Ascending aorta (tissue), 2 donors: ENCODE measurements at regions of chr2 and their contacts with region 1.

Region 1: DNA sequence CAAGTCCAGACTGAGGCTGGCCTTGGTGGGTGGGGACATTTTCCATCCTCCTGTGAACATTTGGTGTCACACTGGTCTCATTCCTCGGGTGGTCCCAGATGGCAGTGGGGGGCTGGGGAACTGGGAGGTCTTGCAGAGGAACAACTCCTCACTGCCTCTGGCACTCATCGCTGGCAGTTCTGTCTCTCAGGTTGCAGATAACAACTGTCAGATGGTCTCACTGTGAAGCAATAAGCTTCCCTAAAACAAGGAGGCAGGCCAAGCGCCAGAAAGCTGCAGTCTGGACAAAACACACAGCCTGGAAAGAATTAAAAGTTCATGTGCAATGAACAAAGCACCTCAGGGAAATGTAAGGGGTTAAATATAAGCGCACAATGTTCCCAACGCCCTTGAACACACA is 78.1 kb downstream of the IRS1 start:
- DNase-seq: no peak
- H3K4me3 ChIP-seq: no peak overlapping the region
- H3K27ac ChIP-seq: no peak overlapping the region
- H3K4me1 ChIP-seq: peaks cover 0 to 6% of the 10 kb centered on the region in 2 donors
- H3K27me3 ChIP-seq: no peaks in the 10 kb centered on the region
- CTCF ChIP-seq: no peak

Region 2: DNA sequence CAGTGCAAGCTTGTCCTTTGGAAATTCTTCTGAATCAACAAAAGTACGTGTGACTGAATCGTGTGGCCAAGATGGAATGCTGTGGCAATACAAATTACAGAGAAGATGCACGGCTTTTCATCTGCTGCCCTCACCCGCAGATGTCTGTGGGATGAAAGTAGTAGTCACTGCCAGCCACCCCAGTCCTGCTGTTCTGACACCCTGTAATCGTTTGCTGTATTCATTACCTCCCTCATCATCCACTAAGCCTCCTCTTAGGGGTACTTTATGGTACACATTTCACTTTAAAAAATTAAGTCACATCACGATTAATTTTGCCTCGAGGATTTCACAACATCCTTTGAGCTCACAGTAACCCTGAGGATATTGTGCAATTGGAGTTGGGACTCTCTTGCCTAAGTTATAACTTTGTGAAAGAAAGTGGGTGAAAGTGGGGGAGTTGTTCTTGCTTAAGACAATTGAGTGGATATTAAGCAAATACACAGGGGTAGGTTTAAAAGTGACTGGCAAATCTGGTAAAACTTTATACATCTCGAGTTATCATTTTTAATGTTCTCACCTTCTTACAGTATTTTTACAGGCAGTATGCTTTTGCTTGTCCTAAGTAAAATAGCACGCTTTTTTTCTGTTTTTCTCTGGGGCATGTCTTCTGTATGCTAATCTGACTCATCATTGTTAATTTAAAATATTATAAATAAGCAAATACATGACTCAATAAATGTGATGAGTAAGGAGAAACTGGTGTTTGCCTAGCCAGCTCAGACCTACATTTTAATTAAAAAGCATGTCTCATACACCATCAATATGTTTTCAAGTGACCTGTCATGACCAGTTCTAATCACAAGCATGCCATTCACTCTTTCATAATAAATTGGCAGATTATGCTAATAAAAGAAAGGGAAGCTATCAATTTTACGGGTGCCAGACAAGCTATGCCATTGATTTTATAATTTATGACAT is 602.8 kb before region 1 on chr2:
- intact Hi-C with region 1: loop called (anchors 10 kb)
- DNase-seq: no peak
- H3K4me3 ChIP-seq: peak overlapping the region in 1 of 2 donors; percentile 4
- H3K27ac ChIP-seq: peak overlapping the region in 1 of 2 donors; percentile 12
- H3K4me1 ChIP-seq: peaks cover 0 to 3% of the 10 kb centered on the region in 2 donors
- H3K27me3 ChIP-seq: no peaks in the 10 kb centered on the region
- CTCF ChIP-seq: no peak

Region 3: GRCh38 chr2:226478109-226478809 is 243.3 kb before region 1 on chr2:
- intact Hi-C with region 1: loop called (anchors 10 kb)
- DNase-seq: peak; percentile 28 to 82
- H3K4me3 ChIP-seq: peak overlapping the region in 1 of 2 donors; percentile 8
- H3K27ac ChIP-seq: peak overlapping the region; percentile 74 to 82
- H3K4me1 ChIP-seq: peaks cover 6 to 8% of the 10 kb centered on the region in 2 donors
- H3K27me3 ChIP-seq: no peaks in the 10 kb centered on the region
- CTCF ChIP-seq: no peak

Region 4: DNA sequence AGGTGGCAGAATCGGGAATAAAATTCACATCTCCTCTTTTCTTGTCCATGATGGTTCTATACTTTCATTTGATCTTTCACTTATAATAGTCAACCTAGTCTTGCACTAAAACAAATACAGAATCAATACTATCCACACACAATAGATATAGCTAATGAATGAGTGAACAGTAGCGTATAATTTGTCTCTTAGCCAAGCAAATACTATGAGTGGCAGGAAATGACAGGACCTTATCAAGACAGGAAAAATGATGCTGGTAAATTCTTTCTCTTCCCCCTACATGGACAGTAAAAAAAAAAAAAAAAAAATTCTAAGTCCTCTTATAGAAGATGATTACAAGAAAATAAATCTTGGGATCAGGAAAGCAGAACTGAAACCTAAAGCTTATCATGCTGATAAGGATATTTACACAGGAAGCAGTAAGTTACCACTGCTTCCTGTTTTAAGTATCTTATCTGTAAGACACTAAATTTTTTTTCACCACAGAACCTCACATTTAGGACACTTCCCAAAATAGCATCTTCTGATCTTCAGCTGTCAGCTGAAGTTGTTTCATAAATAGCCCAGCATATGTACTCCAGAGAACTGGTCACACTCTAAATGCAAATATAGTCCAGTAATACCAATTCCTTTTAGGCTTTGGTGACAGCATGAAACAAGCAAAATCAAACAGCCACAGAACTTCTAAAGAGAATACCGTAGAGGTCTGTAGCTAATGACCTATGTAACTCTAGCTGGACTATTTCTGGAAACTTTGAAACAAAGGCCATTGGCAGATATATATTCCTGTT is 51.0 kb after region 1 on chr2:
- intact Hi-C with region 1: no loop called
- DNase-seq: no peak
- H3K4me3 ChIP-seq: no peak overlapping the region
- H3K27ac ChIP-seq: no peak overlapping the region
- H3K4me1 ChIP-seq: peaks cover 0 to 19% of the 10 kb centered on the region in 2 donors
- H3K27me3 ChIP-seq: no peaks in the 10 kb centered on the region
- CTCF ChIP-seq: no peak

Region 5: GRCh38 chr2:226791487-226792081 is 70.0 kb after region 1 on chr2:
- intact Hi-C with region 1: loop called (anchors 2 kb)
- DNase-seq: peak; percentile 46 to 95
- H3K4me3 ChIP-seq: peak overlapping the region; percentile 70 to 75
- H3K27ac ChIP-seq: peak overlapping the region; percentile 93 to 94
- H3K4me1 ChIP-seq: peaks cover 9 to 34% of the 10 kb centered on the region in 2 donors
- H3K27me3 ChIP-seq: no peaks in the 10 kb centered on the region
- CTCF ChIP-seq: peak in 2 of 3 experiments; percentile 39 to 74